GM12878 (cell line): ENCODE measurements at regions of chr4 and their contacts with region 1.

Region 1: GRCh38 chr4:128942607-128943006 is 133.1 kb downstream of the JADE1 start:
- DNase-seq: no peak
- ATAC-seq: no peak
- H3K4me3 ChIP-seq: no peak overlapping the region
- H3K27ac ChIP-seq: no peak overlapping the region
- H3K4me1 ChIP-seq: no peaks in the 10 kb centered on the region
- H3K27me3 ChIP-seq: no peaks in the 10 kb centered on the region
- CTCF ChIP-seq: no peak
- EP300 ChIP-seq: no peak
- POLR2A ChIP-seq: no peak
- RAD21 ChIP-seq: no peak

Region 2: DNA sequence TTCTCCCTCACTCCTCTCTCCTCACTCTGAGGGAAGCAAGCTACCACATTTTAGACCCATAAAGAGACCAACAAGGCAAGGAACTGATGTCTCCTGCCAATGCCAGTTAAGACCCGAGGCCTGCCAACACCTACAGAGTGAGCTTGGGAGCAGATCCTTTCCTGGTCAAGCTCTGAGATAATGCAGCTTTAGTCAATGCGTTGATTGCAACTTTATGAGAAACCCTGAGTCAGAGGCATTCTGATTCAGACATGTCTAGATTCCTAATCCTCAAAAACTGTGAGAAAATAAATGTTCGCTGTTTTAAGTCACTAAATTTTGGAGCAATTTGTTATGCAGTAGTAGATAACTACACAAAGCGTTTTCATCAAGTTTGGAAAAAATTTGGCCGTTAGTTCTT is 17.7 kb before region 1 on chr4:
- CTCF ChIA-PET with region 1: no interaction called
- POLR2A ChIA-PET with region 1: no interaction called
- RAD21 ChIA-PET with region 1: no interaction called
- SMC1A ChIA-PET with region 1: no interaction called
- in situ Hi-C with region 1: no loop called
- intact Hi-C with region 1: no loop called
- DNase-seq: no peak
- ATAC-seq: no peak
- H3K4me3 ChIP-seq: no peak overlapping the region
- H3K27ac ChIP-seq: no peak overlapping the region
- H3K4me1 ChIP-seq: no peaks in the 10 kb centered on the region
- H3K27me3 ChIP-seq: no peaks in the 10 kb centered on the region
- CTCF ChIP-seq: no peak
- EP300 ChIP-seq: no peak
- POLR2A ChIP-seq: no peak
- RAD21 ChIP-seq: no peak

Region 3: GRCh38 chr4:128986908-128987475 is 44.4 kb after region 1 on chr4:
- CTCF ChIA-PET with region 1: no interaction called
- POLR2A ChIA-PET with region 1: no interaction called
- RAD21 ChIA-PET with region 1: no interaction called
- SMC1A ChIA-PET with region 1: no interaction called
- in situ Hi-C with region 1: no loop called
- intact Hi-C with region 1: loop called (anchors 1 kb)
- DNase-seq: no peak
- ATAC-seq: no peak
- H3K4me3 ChIP-seq: no peak overlapping the region
- H3K27ac ChIP-seq: no peak overlapping the region
- H3K4me1 ChIP-seq: no peaks in the 10 kb centered on the region
- H3K27me3 ChIP-seq: no peaks in the 10 kb centered on the region
- CTCF ChIP-seq: no peak
- EP300 ChIP-seq: no peak
- POLR2A ChIP-seq: no peak
- RAD21 ChIP-seq: no peak

Region 4: GRCh38 chr4:129064717-129065116 is 122.1 kb after region 1 on chr4:
- CTCF ChIA-PET with region 1: no interaction called
- POLR2A ChIA-PET with region 1: no interaction called
- RAD21 ChIA-PET with region 1: no interaction called
- SMC1A ChIA-PET with region 1: no interaction called
- in situ Hi-C with region 1: no loop called
- intact Hi-C with region 1: no loop called
- DNase-seq: no peak
- ATAC-seq: no peak
- H3K4me3 ChIP-seq: no peak overlapping the region
- H3K27ac ChIP-seq: no peak overlapping the region
- H3K4me1 ChIP-seq: no peaks in the 10 kb centered on the region
- H3K27me3 ChIP-seq: no peaks in the 10 kb centered on the region
- CTCF ChIP-seq: no peak
- EP300 ChIP-seq: no peak
- POLR2A ChIP-seq: no peak
- RAD21 ChIP-seq: no peak

Region 5: DNA sequence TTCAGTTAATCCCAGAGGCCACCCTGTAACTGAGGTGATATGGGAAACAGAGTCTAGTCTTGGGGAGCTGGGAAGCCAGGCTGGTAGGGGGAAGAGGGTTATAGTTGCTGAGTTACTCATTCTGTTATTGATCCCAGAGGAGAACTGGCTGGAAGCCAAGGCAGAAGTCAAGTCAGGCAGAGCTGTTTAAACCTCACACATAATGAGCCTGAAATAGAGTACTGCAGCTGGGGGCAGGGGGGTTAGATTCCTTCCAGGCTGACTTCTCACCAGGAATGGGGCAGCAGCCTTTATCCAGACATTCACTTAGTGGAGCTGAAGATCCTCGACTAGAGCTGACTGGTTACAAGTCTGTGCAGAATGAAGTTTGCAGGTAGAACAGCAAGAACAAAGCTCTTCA is 298.2 kb after region 1 on chr4:
- CTCF ChIA-PET with region 1: no interaction called
- POLR2A ChIA-PET with region 1: no interaction called
- RAD21 ChIA-PET with region 1: no interaction called
- SMC1A ChIA-PET with region 1: no interaction called
- in situ Hi-C with region 1: no loop called
- intact Hi-C with region 1: no loop called
- DNase-seq: no peak
- ATAC-seq: no peak
- H3K4me3 ChIP-seq: no peak overlapping the region
- H3K27ac ChIP-seq: no peak overlapping the region
- H3K4me1 ChIP-seq: no peaks in the 10 kb centered on the region
- H3K27me3 ChIP-seq: no peaks in the 10 kb centered on the region; a peak in 1 of 4 replicates
- CTCF ChIP-seq: no peak
- EP300 ChIP-seq: no peak
- POLR2A ChIP-seq: no peak
- RAD21 ChIP-seq: no peak